HepG2 (cell line): ENCODE measurements at regions of chr1 and their contacts with region 1.

Region 1: DNA sequence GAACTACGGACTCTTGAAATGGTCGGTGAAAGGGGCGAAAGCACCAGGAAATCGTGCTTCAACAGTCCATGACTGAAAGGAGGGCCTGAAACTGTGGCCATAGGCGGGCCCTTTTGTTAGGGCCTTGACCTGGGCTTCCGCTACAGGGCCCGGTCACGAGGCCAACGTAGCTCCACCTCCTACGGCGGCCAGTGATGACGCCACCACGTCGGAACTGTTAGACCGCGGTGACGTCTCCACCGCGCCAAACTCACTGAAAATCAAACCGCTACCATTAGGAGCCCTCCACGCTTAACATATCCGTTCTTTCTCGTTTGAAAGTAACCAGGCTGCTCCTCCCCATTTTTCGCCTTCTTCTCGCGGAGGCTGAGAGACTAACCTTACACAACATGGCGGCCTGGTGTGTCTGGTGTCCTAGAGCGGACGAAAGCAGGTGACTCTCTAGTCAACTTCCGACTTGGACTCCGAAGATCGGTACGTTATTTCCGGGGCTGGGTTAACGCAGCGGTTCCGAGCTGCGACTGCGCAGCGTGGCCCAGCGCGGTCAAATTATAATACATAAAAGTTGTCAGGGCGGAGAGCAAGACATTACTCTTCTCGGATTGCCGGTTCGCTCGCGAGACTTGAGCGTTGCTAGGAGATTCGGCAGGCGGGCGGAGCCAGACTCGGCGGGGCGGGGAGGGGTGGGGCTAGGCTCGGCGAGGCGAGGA is 376 bp upstream of the CACYBP start:
- DNase-seq: peak; percentile 97
- ATAC-seq: peak; percentile 89
- H3K4me3 ChIP-seq: peak overlapping the region; percentile 68 to 92 (median 79)
- H3K27ac ChIP-seq: peak overlapping the region; percentile 98
- H3K4me1 ChIP-seq: peaks cover 69% of the 10 kb centered on the region
- H3K27me3 ChIP-seq: no peaks in the 10 kb centered on the region; a peak in 1 of 5 replicates
- CTCF ChIP-seq: no peak
- EP300 ChIP-seq: peak in 1 of 2 experiments; percentile 41; a peak in 1 of 4 replicates
- POLR2A ChIP-seq: peak; percentile 95 to 97
- RAD21 ChIP-seq: no peak

Region 2: GRCh38 chr1:174262349-174263241 is 736.8 kb before region 1 on chr1:
- CTCF ChIA-PET with region 1: no interaction called
- POLR2A ChIA-PET with region 1: no interaction called
- in situ Hi-C with region 1: loop called (anchors 25 kb)
- intact Hi-C with region 1: loop called (anchors 5 kb)
- DNase-seq: peak; percentile 46
- ATAC-seq: peak; percentile 47
- H3K4me3 ChIP-seq: no peak overlapping the region
- H3K27ac ChIP-seq: no peak overlapping the region
- H3K4me1 ChIP-seq: peaks cover 23% of the 10 kb centered on the region
- H3K27me3 ChIP-seq: no peaks in the 10 kb centered on the region
- CTCF ChIP-seq: peak; percentile 81
- EP300 ChIP-seq: no peak
- POLR2A ChIP-seq: no peak
- RAD21 ChIP-seq: peak; percentile 66

Region 3: GRCh38 chr1:174469687-174470086 is 529.7 kb before region 1 on chr1:
- CTCF ChIA-PET with region 1: no interaction called
- POLR2A ChIA-PET with region 1: no interaction called
- in situ Hi-C with region 1: no loop called
- intact Hi-C with region 1: no loop called
- DNase-seq: no peak
- ATAC-seq: no peak
- H3K4me3 ChIP-seq: no peak overlapping the region
- H3K27ac ChIP-seq: no peak overlapping the region
- H3K4me1 ChIP-seq: no peaks in the 10 kb centered on the region
- H3K27me3 ChIP-seq: no peaks in the 10 kb centered on the region
- CTCF ChIP-seq: no peak
- EP300 ChIP-seq: no peak
- POLR2A ChIP-seq: no peak
- RAD21 ChIP-seq: no peak

Region 4: GRCh38 chr1:174812656-174813055 is 186.7 kb before region 1 on chr1:
- CTCF ChIA-PET with region 1: no interaction called
- POLR2A ChIA-PET with region 1: interaction called, 11 read pairs
- in situ Hi-C with region 1: no loop called
- intact Hi-C with region 1: no loop called
- DNase-seq: peak; percentile 95
- ATAC-seq: peak; percentile 100
- H3K4me3 ChIP-seq: no peak overlapping the region
- H3K27ac ChIP-seq: peak overlapping the region; percentile 23
- H3K4me1 ChIP-seq: peaks cover 23% of the 10 kb centered on the region
- H3K27me3 ChIP-seq: no peaks in the 10 kb centered on the region
- CTCF ChIP-seq: no peak
- EP300 ChIP-seq: peak; percentile 70 to 93
- POLR2A ChIP-seq: no peak
- RAD21 ChIP-seq: no peak

Region 5: GRCh38 chr1:174942547-174943255 is 56.7 kb before region 1 on chr1:
- CTCF ChIA-PET with region 1: no interaction called
- POLR2A ChIA-PET with region 1: interaction called, 14 read pairs
- in situ Hi-C with region 1: no loop called
- intact Hi-C with region 1: no loop called
- DNase-seq: peak; percentile 85
- ATAC-seq: peak; percentile 99
- H3K4me3 ChIP-seq: peak overlapping the region in 1 of 3 experiments; percentile 19; a peak in 1 of 6 replicates
- H3K27ac ChIP-seq: peak overlapping the region; percentile 56
- H3K4me1 ChIP-seq: peaks cover 33% of the 10 kb centered on the region
- H3K27me3 ChIP-seq: no peaks in the 10 kb centered on the region
- CTCF ChIP-seq: 0 out of 2 replicates have a peak, but pooled peaks have one; percentile 8
- EP300 ChIP-seq: peak; percentile 57 to 87; a peak in 3 of 4 replicates
- POLR2A ChIP-seq: no peak
- RAD21 ChIP-seq: no peak

Region 6: DNA sequence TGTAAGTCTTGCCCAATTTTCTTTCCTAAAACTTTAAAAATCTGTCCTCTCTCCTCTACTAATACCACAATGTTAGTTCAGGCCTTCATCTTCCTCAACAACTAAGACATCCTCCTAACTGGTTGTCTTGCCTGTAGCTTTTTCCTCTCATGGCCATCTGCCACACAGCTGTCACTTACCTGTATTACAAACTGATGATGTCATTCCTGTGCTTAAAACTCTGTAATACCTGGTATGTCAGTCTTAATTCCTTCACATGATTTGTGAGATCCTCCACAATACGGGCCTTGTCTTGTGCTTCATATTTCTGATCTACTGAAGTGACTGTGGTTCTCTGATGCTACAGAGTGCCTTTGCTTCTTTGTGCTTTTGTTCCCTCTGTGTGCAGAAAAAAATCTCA is 14.1 kb after region 1 on chr1:
- CTCF ChIA-PET with region 1: no interaction called
- POLR2A ChIA-PET with region 1: interaction called, 10 read pairs
- in situ Hi-C with region 1: no loop called
- intact Hi-C with region 1: no loop called
- DNase-seq: no peak
- ATAC-seq: no peak
- H3K4me3 ChIP-seq: no peak overlapping the region
- H3K27ac ChIP-seq: no peak overlapping the region
- H3K4me1 ChIP-seq: no peaks in the 10 kb centered on the region
- H3K27me3 ChIP-seq: no peaks in the 10 kb centered on the region
- CTCF ChIP-seq: no peak
- EP300 ChIP-seq: no peak
- POLR2A ChIP-seq: no peak
- RAD21 ChIP-seq: no peak